Colonic mucosa (tissue), 4 donors: ENCODE measurements at regions of chr6 and their contacts with region 1.

Region 1: DNA sequence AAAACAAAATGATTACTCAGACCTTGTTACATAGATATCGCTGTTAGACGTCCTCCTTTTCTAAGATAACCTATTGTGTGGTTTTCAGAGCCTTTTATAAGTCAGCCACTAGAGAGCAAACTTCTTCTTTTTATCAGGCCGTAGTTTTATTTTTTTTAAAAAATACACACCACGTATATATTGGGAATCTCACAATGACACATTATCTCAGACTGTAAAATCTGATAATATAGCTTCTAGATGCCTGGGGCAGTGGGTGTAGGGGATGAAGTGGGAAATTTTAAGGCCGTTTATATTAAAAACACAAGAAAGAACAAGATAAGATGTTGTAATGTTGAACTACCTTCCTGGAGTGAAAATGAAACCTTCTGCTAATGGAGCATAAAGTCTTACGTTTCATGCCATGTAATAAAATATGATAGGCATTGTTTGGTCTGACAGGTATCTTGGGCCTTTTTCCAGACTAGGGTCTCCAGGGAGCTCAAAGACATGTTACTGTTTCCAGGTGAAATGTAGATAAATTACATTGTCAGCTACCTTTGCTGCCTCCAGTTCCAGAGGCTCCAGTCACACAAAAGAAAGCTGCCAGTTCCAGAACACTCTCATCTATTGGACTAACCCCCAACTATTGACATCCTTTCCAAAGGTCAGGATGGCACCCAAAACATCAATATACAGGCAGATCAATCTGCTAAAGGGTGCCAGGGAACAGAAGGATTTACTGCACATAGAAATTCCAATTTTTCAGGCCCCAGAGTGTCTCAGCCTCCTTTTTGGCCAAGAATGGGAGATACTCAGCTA is 130.2 kb upstream of the AKIRIN2 start:
- DNase-seq: no peak
- H3K4me3 ChIP-seq: peak overlapping the region; percentile 26
- H3K27ac ChIP-seq: peak overlapping the region; percentile 33
- H3K4me1 ChIP-seq: peaks cover 3% of the 10 kb centered on the region
- H3K27me3 ChIP-seq: no peaks in the 10 kb centered on the region
- CTCF ChIP-seq: peak; percentile 43

Region 2: GRCh38 chr6:88238065-88238464 is 405.8 kb after region 1 on chr6:
- intact Hi-C with region 1: loop called (anchors 5 kb)
- DNase-seq: peak; percentile 20
- H3K4me3 ChIP-seq: no peak overlapping the region
- H3K27ac ChIP-seq: no peak overlapping the region
- H3K4me1 ChIP-seq: no peaks in the 10 kb centered on the region
- H3K27me3 ChIP-seq: no peaks in the 10 kb centered on the region
- CTCF ChIP-seq: peak; percentile 29